Naive thymus-derived CD8-positive, alpha-beta T cell (primary cell): ENCODE measurements at regions of chr4 and their contacts with region 1.

Region 1: GRCh38 chr4:48906206-48907173 is at the start of gene OCIAD2:
- DNase-seq: peak; percentile 69 to 93 (median 85)
- ATAC-seq: peak; percentile 98
- H3K4me3 Mint-ChIP-seq: peak within 1 kb of the TSS; percentile 87 to 99 (median 94)
- H3K27ac Mint-ChIP-seq: peak within 1 kb of the TSS; percentile 94 to 99 (median 96)
- H3K4me1 Mint-ChIP-seq: peaks cover 30 to 51% (median 47%) of the 10 kb centered on the region in 4 donors
- H3K27me3 Mint-ChIP-seq: no peaks in the 10 kb centered on the region
- polyA plus RNA-seq, gene OCIAD2: 261 to 277 (median 272) TPM

Region 2: DNA sequence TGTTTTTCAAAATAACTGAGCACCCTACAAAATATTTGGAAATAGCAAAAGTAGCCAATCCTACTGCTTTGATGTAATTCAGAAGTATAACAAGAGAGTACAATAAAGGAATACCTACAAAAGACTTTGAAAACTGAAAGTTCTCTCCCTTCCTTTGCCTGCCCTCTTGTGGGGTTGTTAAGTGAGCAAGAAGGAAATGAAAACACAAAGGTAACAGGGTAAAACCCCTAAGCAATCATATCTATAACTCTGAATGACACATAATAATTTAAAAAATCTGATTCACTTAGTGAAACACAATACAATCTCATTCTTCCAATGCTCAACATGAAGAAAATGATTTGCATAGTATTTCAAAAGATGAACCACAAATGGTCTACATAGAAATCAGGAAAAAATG is 224.6 kb before region 1 on chr4:
- POLR2A ChIA-PET with region 1: no interaction called
- DNase-seq: peak in 5 of 10 donors; percentile 8 to 42 (median 12)
- ATAC-seq: peak; percentile 61 to 62
- H3K4me3 Mint-ChIP-seq: no peak overlapping the region
- H3K27ac Mint-ChIP-seq: peak overlapping the region in 8 of 10 donors; percentile 24 to 73 (median 44)
- H3K4me1 Mint-ChIP-seq: peaks cover 13 to 50% (median 47%) of the 10 kb centered on the region in 4 donors
- H3K27me3 Mint-ChIP-seq: no peaks in the 10 kb centered on the region

Region 3: GRCh38 chr4:48779998-48780742 is 126.3 kb before region 1 on chr4 and contains the start of gene FRYL:
- POLR2A ChIA-PET with region 1: interaction called, 22 read pairs
- DNase-seq: peak; percentile 92 to 99 (median 97)
- ATAC-seq: peak; percentile 86 to 87
- H3K4me3 Mint-ChIP-seq: peak within 1 kb of the TSS; percentile 86 to 96 (median 94)
- H3K27ac Mint-ChIP-seq: peak within 1 kb of the TSS; percentile 87 to 97 (median 94)
- H3K4me1 Mint-ChIP-seq: peaks cover 10 to 47% (median 42%) of the 10 kb centered on the region in 4 donors
- H3K27me3 Mint-ChIP-seq: no peaks in the 10 kb centered on the region
- polyA plus RNA-seq, gene FRYL: 31.4 to 36.4 (median 31.6) TPM

Region 4: GRCh38 chr4:48830706-48831531 is 75.6 kb before region 1 on chr4 and contains the start of gene OCIAD1:
- POLR2A ChIA-PET with region 1: interaction called, 16 read pairs
- DNase-seq: peak; percentile 81 to 98 (median 94)
- ATAC-seq: peak; percentile 95 to 96
- H3K4me3 Mint-ChIP-seq: peak within 1 kb of the TSS; percentile 95 to 100 (median 100)
- H3K27ac Mint-ChIP-seq: peak within 1 kb of the TSS; percentile 99 to 100 (median 100)
- H3K4me1 Mint-ChIP-seq: peaks cover 13 to 37% (median 34%) of the 10 kb centered on the region in 4 donors
- H3K27me3 Mint-ChIP-seq: peaks cover 0 to 3% (median 0%) of the 10 kb centered on the region in 5 donors
- polyA plus RNA-seq, gene OCIAD1: 172 to 191 (median 188) TPM

Region 5: GRCh38 chr4:48862657-48863056 is 43.8 kb before region 1 on chr4:
- POLR2A ChIA-PET with region 1: no interaction called
- DNase-seq: no peak
- ATAC-seq: no peak
- H3K4me3 Mint-ChIP-seq: no peak overlapping the region
- H3K27ac Mint-ChIP-seq: peak overlapping the region in 2 of 10 donors; percentile 32 to 73
- H3K4me1 Mint-ChIP-seq: peaks cover 0 to 3% (median 0%) of the 10 kb centered on the region in 4 donors
- H3K27me3 Mint-ChIP-seq: no peaks in the 10 kb centered on the region

Region 6: DNA sequence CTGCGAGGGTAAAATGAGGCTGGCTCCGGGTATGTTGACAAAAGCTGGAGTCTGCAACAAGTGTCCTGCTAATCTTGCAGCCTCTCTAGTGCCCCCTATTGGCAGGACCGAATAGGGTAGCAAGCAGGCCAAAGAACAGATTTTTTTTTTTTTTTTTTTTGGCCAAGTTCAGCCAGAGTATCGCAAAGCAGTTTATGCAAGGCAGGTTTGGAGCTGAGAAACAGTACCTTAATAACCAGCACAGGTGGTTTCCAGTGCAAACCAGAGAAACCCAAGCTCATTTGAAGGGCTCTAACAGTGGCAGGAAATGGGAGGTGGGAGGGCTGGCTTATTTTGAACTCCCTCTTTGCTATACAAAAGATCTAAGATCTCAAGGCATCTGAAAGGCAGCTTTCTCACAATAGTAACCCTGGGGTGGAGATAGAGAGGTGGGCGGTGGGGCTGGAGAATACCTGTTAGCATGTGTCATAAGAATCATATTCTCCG is 38.3 kb after region 1 on chr4:
- POLR2A ChIA-PET with region 1: interaction called, 15 read pairs
- DNase-seq: peak in 8 of 10 donors; percentile 39 to 74 (median 54)
- ATAC-seq: peak; percentile 96 to 97
- H3K4me3 Mint-ChIP-seq: peak overlapping the region; percentile 38 to 73 (median 58)
- H3K27ac Mint-ChIP-seq: peak overlapping the region in 9 of 10 donors; percentile 4 to 70 (median 45)
- H3K4me1 Mint-ChIP-seq: peaks cover 22 to 40% (median 35%) of the 10 kb centered on the region in 4 donors
- H3K27me3 Mint-ChIP-seq: no peaks in the 10 kb centered on the region